Activated CD4-positive, alpha-beta T cell treated with anti-CD3 and anti-CD28 coated beads for 36 hours (primary cell): ENCODE measurements at regions of chr4 and their contacts with region 1.

Region 1: DNA sequence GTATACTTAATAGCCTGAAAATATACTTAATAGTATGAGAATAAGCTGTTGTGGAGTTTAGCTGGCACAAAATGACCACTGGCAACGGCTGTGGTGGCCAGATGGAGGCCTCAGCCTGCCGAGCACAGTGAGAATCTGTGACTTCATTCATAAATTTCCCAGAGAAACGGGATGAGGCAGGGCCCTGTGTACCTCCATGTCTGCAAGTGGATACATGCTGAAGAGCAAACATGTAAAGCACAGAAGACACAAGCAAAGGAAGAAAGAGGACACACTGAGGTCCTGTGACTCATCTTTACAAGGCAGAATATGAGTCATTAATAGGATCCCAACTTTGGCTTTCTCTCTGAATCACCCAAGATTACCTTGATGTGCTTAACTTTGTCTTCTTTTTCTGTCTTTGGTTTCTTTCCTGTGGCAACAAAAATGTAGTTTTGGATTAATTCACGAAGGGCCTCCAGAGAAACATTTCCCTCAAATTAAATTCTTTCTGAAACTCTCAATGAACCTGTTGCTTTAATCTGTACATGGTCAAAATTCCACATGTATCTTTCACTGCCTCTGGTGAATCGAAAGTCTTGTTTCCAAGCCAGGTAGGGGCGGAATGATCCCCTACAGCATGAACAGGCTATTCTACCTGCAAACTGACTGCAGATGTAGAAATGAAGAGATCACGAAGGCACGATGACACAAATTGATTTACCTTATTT is 56.4 kb downstream of the IRF2 start:
- DNase-seq: peak; percentile 22
- ATAC-seq: peak; percentile 73
- H3K4me3 Mint-ChIP-seq: no peak overlapping the region
- H3K27ac Mint-ChIP-seq: peak overlapping the region; percentile 64
- H3K4me1 Mint-ChIP-seq: peaks cover 90% of the 10 kb centered on the region
- H3K27me3 Mint-ChIP-seq: no peaks in the 10 kb centered on the region

Region 2: GRCh38 chr4:184282251-184282713 is 135.7 kb before region 1 on chr4:
- CTCF ChIA-PET with region 1: interaction called, 5 read pairs
- POLR2A ChIA-PET with region 1: interaction called, 4 read pairs
- intact Hi-C with region 1: loop called (anchors 1 kb)
- DNase-seq: peak; percentile 82
- ATAC-seq: peak; percentile 74
- H3K4me3 Mint-ChIP-seq: peak overlapping the region; percentile 56
- H3K27ac Mint-ChIP-seq: peak overlapping the region; percentile 93
- H3K4me1 Mint-ChIP-seq: peaks cover 65% of the 10 kb centered on the region
- H3K27me3 Mint-ChIP-seq: peaks cover 4% of the 10 kb centered on the region

Region 3: GRCh38 chr4:184318852-184319251 is 99.1 kb before region 1 on chr4:
- CTCF ChIA-PET with region 1: interaction called, 6 read pairs
- POLR2A ChIA-PET with region 1: no interaction called
- intact Hi-C with region 1: loop called (anchors 1 kb)
- DNase-seq: no peak
- ATAC-seq: peak; percentile 8
- H3K4me3 Mint-ChIP-seq: no peak overlapping the region
- H3K27ac Mint-ChIP-seq: peak overlapping the region; percentile 59
- H3K4me1 Mint-ChIP-seq: peaks cover 35% of the 10 kb centered on the region
- H3K27me3 Mint-ChIP-seq: peaks cover 3% of the 10 kb centered on the region

Region 4: DNA sequence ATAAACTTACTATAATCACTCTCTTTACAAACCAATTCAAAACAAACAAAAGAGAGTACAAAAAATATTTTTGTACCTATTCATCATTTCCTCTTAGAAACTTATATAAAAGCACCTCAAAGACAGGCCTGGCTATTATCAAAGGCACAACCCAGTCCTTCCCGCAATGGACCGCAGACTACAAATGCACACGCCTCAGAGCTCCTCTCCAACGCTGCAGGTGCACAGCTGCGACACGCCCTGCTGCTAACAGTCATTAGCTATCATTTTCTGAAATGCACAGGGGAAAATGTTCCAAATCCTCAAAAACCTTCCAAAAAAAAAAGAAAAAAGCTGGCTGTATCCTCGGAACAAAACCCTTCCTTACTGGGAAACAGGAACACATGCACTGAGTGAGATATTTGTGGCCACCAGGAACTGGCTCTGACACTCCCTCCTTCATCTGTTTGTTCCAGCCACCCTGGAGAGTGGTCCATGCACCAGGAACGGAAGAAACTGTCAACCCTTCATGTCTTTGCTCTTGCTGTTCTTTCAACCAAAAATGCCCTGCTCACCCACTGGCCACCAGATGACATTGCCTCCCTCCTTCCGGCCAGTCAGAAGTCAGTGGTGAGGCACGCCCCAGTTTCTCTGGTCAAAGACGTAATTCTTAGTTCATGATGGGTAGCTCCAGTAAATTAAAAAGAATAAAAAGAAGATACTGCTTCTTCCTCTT is 39.7 kb after region 1 on chr4:
- CTCF ChIA-PET with region 1: interaction called, 4 read pairs
- POLR2A ChIA-PET with region 1: no interaction called
- intact Hi-C with region 1: loop called (anchors 1 to 5 kb)
- DNase-seq: no peak
- ATAC-seq: no peak
- H3K4me3 Mint-ChIP-seq: no peak overlapping the region
- H3K27ac Mint-ChIP-seq: no peak overlapping the region
- H3K4me1 Mint-ChIP-seq: peaks cover 78% of the 10 kb centered on the region
- H3K27me3 Mint-ChIP-seq: no peaks in the 10 kb centered on the region

Region 5: DNA sequence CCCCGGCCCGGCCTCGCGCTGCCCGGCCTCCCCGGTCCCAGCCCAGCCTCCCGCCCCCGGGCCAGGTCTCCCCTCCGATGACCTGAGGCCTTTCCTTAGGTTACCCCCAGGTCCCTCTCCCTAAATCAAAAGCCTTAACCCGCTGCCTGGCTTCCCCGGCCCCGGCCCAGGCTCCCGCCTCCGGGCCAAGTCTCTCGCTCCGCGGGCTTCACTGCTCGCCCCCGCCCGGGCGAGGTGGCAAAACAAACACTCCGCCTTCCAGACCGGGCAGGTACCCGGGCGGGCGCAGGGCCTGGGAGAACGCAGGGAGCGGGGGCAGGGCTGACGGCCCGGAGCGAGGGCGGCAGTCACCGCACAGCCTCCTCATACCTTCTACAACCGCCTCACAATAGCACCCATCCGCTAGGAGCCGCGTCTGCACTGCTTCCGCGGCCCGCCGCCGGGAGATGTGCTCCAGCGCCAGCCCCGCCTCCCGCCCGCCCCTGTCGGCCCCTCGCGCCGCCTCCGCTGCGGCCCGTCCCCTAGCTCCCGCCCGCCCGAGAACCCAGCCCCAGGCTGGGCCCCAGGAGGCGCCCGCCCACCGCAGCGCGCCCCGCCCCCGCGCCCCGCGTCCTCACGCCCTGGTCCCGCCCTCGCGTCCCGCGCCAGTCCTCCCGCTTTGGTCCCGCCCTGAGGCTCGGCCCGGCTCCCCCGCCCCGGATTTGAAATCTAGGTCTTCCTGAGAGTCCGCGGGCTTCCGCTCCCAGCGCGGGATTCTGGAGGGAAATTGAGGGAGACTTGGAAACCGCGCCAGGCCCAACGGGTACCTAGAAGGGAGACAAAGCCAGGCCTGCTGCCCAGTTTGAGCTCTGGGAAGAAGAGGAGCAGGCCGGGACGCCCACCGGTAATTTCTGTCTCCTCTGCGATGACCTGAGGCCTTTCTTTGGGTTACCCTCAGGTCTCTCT is 231.3 kb after region 1 on chr4 and contains the starts of genes CASP3 and PRIMPOL:
- CTCF ChIA-PET with region 1: interaction called, 3 read pairs
- POLR2A ChIA-PET with region 1: no interaction called
- intact Hi-C with region 1: loop called (anchors 1 to 2 kb)
- DNase-seq: peak; percentile 98
- ATAC-seq: peak; percentile 88
- H3K4me3 Mint-ChIP-seq: peak within 1 kb of the TSS; percentile 94
- H3K27ac Mint-ChIP-seq: peak within 1 kb of the TSS; percentile 95
- H3K4me1 Mint-ChIP-seq: peaks cover 51% of the 10 kb centered on the region
- H3K27me3 Mint-ChIP-seq: no peaks in the 10 kb centered on the region
- total RNA-seq, gene CASP3: 44.3 to 65.7 TPM
- total RNA-seq, gene PRIMPOL: 20.4 to 24.3 TPM